Ascending aorta (tissue), 2 donors: ENCODE measurements at regions of chr17 and their contacts with region 1.

Region 1: DNA sequence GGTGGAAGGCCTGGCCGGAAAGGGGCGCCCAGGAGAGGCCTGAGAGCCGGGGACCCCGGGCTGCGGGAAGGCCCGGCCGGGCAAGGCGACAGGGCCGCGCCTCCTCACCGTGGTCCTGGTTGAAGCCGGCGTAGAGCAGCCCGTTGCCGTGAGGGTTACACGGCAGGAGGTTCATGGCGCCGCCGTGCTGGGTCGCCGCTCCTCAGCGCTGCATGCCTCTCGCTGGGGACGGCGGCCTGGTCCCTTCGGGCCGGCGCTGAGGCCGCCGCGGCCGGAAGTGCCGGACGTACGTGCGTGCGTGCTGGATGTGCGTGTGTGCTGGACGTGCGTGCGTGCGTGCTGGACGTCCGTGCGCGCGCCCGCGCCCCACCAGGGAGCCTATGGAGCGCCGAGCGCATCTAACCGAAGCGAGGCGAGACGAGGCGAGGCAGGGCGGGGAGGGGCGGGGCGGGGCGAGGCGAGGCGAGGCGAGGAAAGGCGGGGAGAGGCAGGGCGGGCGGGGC is at the start of gene WDR45B:
- DNase-seq: peak; percentile 77 to 98
- H3K4me3 ChIP-seq: peak within 1 kb of the TSS; percentile 69 to 100
- H3K27ac ChIP-seq: peak within 1 kb of the TSS; percentile 87 to 100
- H3K4me1 ChIP-seq: peaks cover 6 to 20% of the 10 kb centered on the region in 2 donors
- H3K27me3 ChIP-seq: no peaks in the 10 kb centered on the region
- CTCF ChIP-seq: no peak
- total RNA-seq, gene WDR45B: 53.7 TPM

Region 2: DNA sequence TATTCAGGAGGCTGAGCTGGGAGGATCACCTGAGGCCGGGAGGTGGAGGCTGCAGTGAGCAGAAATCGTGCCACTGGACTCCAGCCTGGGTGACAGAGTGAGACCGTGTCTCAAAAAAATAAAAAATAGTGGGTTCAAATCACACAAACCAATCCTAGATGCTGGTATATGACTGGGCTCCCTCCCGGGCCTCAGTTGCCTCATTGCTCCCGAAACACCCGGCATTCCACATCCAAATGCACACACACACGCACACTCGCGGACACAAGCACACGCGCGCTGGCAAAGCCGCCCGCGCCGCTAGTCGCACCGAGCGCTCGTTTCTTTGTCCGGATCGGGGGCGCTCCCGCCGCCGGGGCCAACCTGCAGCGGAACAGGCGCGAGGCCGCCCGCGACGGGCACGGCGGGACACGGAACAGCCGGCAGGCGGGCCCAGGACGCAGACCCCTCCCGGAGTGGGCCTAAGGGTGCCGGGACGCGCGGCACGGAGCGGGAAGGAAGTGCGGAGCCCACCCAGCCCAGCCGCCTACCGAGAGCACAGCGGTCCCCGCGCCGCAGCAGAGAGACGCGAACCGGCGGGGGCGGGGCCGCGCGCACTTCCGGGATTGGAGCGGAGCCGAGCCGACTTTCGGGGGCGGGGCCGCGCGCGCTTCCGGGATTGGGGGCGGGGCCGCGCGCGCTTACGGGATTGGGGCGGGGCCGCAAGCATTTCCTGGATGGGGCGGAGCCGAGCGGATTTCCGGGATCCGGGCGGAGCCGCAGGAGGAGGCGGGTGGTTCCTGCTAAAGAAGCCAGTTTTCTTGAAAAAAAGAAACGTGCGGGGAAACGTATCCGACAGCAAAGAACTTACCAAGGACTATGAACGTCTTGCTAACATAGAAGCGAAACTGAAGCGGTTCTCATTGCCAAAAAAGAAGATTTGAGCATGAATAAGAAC is 197.8 kb before region 1 on chr17 and contains the start of gene CYBC1:
- intact Hi-C with region 1: loop called (anchors 2 kb)
- DNase-seq: peak; percentile 61 to 96
- H3K4me3 ChIP-seq: peak within 1 kb of the TSS; percentile 87 to 100
- H3K27ac ChIP-seq: peak within 1 kb of the TSS; percentile 90 to 94
- H3K4me1 ChIP-seq: peaks cover 8 to 15% of the 10 kb centered on the region in 2 donors
- H3K27me3 ChIP-seq: no peaks in the 10 kb centered on the region
- CTCF ChIP-seq: no peak
- total RNA-seq, gene CYBC1: 124 TPM

Region 3: GRCh38 chr17:82457997-82458864 is 190.0 kb before region 1 on chr17 and contains the start of gene NARF:
- intact Hi-C with region 1: loop called (anchors 2 kb)
- DNase-seq: peak; percentile 92 to 99
- H3K4me3 ChIP-seq: peak within 1 kb of the TSS; percentile 77 to 86
- H3K27ac ChIP-seq: peak within 1 kb of the TSS; percentile 100
- H3K4me1 ChIP-seq: peaks cover 0 to 12% of the 10 kb centered on the region in 2 donors
- H3K27me3 ChIP-seq: no peaks in the 10 kb centered on the region
- CTCF ChIP-seq: no peak
- total RNA-seq, gene NARF: 38.3 TPM

Region 4: DNA sequence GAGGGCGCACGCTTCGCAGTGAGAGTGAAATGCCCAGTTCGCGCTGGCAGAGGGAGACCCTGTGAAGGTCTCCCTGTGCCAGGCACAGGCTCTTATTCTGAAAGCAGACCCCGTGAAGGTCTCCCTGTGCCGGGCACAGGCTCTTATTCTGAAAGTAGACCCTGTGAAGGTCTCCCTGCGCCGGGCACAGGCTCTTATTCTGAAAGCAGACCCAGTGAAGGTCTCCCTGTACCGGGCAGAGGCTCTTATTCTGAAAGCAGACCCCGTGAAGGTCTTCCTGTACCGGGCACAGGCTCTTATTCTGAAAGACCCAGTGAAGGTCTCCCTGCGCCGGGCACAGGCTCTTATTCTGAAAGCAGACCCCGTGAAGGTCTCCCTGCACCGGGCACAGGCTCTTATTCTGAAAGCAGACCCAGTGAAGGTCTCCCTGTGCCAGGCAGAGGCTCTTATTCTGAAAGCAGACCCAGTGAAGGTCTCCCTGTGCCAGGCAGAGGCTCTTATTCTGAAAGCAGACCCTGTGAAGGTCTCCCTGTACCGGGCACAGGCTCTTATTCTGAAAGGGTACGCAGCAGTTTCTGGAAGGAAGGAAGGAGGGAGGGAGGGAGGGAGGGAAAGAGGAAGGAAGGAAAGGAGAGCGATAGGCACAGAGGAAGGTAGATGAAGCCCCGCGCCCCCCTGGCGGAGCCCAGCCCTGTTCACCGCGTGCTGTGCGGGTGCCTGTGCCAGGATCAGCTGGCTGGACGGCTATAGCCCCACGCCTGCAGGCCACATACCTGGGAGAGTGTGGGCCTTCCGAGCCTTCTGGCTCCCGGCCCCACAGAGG is 55.2 kb before region 1 on chr17:
- intact Hi-C with region 1: loop called (anchors 2 kb)
- DNase-seq: peak; percentile 63 to 91
- H3K4me3 ChIP-seq: peak overlapping the region; percentile 77 to 79
- H3K27ac ChIP-seq: peak overlapping the region; percentile 89 to 94
- H3K4me1 ChIP-seq: peaks cover 5 to 32% of the 10 kb centered on the region in 2 donors
- H3K27me3 ChIP-seq: no peaks in the 10 kb centered on the region
- CTCF ChIP-seq: no peak

Region 5: GRCh38 chr17:82698065-82698973 is 50.1 kb after region 1 on chr17 and contains the start of gene RAB40B:
- intact Hi-C with region 1: loop called (anchors 1 kb)
- DNase-seq: peak; percentile 98 to 100
- H3K4me3 ChIP-seq: peak within 1 kb of the TSS; percentile 71 to 99
- H3K27ac ChIP-seq: peak within 1 kb of the TSS in 1 of 2 donors; percentile 65
- H3K4me1 ChIP-seq: peaks cover 10 to 11% of the 10 kb centered on the region in 2 donors
- H3K27me3 ChIP-seq: no peaks in the 10 kb centered on the region
- CTCF ChIP-seq: no peak
- total RNA-seq, gene RAB40B: 9.4 TPM

Region 6: GRCh38 chr17:82716203-82717010 is 68.2 kb after region 1 on chr17 and contains the start of gene FN3KRP:
- intact Hi-C with region 1: loop called (anchors 1 kb)
- DNase-seq: peak; percentile 78 to 96
- H3K4me3 ChIP-seq: peak within 1 kb of the TSS; percentile 80 to 94
- H3K27ac ChIP-seq: peak within 1 kb of the TSS; percentile 46 to 55
- H3K4me1 ChIP-seq: peaks cover 4 to 9% of the 10 kb centered on the region in 2 donors
- H3K27me3 ChIP-seq: no peaks in the 10 kb centered on the region
- CTCF ChIP-seq: no peak
- total RNA-seq, gene FN3KRP: 21.0 TPM

Region 7: DNA sequence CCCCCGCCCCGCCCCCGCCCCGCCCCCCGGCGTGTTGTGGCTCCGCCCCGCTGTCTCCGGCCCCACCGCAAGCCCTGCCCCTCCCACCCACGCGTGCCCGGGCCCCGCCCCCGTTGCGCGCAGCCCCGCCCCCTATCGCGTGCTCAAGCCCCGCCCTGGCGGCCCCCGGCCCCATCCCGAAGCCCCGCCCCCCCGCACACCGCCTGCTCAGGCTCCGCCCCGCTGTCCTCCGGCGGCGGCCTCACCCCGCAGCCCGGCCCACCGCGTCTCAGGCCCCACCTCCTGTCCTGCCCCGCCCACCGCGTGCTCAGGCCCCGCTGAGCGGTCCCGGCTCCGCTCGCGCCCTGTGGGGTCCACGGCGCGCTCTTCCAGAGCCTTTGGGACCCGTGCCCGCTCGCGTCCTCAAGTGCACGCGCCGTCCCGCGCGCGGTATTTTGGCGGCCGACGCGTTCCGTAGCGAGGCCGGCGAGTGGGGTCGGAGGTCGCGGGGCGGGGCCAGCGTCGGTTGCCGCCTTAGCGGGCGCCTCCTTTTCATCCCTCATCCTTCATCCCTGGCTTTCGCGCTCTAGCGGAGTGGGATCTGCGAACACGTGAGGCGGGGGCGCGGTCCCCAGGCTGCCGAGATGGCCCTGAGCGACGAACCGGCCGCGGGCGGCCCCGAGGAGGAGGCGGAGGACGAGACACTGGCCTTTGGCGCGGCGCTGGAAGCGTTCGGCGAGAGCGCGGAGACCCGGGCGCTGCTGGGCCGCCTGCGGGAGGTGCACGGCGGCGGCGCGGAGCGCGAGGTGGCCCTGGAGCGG is 103.6 kb after region 1 on chr17 and contains the start of gene TBCD:
- intact Hi-C with region 1: loop called (anchors 1 kb)
- DNase-seq: peak; percentile 30 to 91
- H3K4me3 ChIP-seq: peak within 1 kb of the TSS; percentile 92 to 98
- H3K27ac ChIP-seq: peak within 1 kb of the TSS; percentile 81 to 91
- H3K4me1 ChIP-seq: peaks cover 7 to 18% of the 10 kb centered on the region in 2 donors
- H3K27me3 ChIP-seq: no peaks in the 10 kb centered on the region
- CTCF ChIP-seq: no peak
- total RNA-seq, gene TBCD: 156 TPM